Ascending aorta (tissue), 2 donors: ENCODE measurements at regions of chr9 and their contacts with region 1.

Region 1: DNA sequence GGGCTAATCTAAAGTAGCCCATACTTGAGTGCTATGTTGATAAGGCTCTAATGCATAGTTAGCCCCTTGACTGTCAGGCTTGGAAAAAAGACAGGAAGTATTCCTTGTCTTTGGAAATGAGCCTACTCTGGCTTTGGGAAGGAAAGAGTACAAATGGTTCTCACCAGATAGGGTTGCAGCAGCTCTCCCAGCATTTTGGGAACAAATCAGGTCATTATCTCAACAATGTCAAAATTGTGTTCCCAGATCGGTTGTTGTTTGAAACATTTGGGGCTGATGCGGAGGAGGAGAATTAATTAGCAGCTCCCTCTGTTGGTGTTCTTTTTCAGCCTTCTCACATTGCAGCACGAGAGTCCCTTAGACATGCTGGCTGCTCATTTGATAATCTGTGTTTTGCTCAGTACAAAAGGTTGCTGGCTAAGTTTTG is 294.7 kb upstream of the DMRT1 start:
- DNase-seq: no peak
- H3K4me3 ChIP-seq: peak overlapping the region in 1 of 2 donors; percentile 16
- H3K27ac ChIP-seq: peak overlapping the region in 1 of 2 donors; percentile 22
- H3K4me1 ChIP-seq: peaks cover 3 to 17% of the 10 kb centered on the region in 2 donors
- H3K27me3 ChIP-seq: no peaks in the 10 kb centered on the region
- CTCF ChIP-seq: peak in 1 of 3 experiments; percentile 46

Region 2: GRCh38 chr9:469672-470551 is 76.9 kb before region 1 on chr9:
- intact Hi-C with region 1: loop called (anchors 5 kb)
- DNase-seq: peak; percentile 15 to 87
- H3K4me3 ChIP-seq: peak overlapping the region; percentile 77 to 80
- H3K27ac ChIP-seq: peak overlapping the region in 1 of 2 donors; percentile 43
- H3K4me1 ChIP-seq: peaks cover 3 to 8% of the 10 kb centered on the region in 2 donors
- H3K27me3 ChIP-seq: no peaks in the 10 kb centered on the region
- CTCF ChIP-seq: no peak

Region 3: GRCh38 chr9:530681-531080 is 16.1 kb before region 1 on chr9:
- intact Hi-C with region 1: loop called (anchors 2 kb)
- DNase-seq: peak; percentile 37 to 81
- H3K4me3 ChIP-seq: no peak overlapping the region
- H3K27ac ChIP-seq: peak overlapping the region; percentile 67 to 75
- H3K4me1 ChIP-seq: peaks cover 0 to 34% of the 10 kb centered on the region in 2 donors
- H3K27me3 ChIP-seq: no peaks in the 10 kb centered on the region
- CTCF ChIP-seq: no peak

Region 4: DNA sequence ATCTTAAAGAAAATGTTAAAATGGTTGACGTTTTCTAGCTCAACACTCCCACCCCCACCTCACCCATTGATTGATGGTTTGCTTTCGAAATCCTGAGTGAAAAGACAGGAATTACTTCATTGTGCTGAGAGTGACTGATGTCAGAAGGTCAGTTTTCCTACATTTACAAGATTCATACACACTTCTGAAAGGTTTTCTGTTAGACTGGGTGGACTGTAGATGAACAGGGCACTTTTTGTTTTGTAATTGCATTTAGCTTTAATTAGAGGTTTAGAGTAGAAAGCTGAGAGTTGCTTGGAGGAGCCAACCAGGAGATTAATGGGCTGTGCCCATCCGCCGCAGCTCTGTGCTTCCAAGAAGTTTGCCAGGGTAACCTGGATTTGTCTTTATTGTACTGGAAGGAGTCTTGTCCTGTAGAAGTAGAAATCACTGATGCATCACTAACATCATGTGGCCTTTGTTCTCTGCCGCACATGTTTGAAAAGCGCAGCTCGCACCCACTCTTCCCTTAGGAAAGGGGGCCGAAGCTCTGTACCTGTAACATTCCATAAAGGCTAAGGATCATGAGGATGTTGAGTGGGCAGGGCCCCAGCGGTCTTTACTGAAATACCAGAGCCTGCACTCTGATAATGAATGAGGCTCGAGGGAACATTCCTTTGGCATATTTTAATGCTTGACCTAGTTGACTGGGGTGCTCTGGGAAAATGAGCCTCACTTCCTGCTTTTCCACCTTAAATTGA is 27.0 kb after region 1 on chr9:
- intact Hi-C with region 1: no loop called
- DNase-seq: no peak
- H3K4me3 ChIP-seq: no peak overlapping the region
- H3K27ac ChIP-seq: no peak overlapping the region
- H3K4me1 ChIP-seq: peaks cover 0 to 18% of the 10 kb centered on the region in 2 donors
- H3K27me3 ChIP-seq: no peaks in the 10 kb centered on the region
- CTCF ChIP-seq: no peak